ENCODE measurements at regions of chr4 and their contacts with region 1.

Region 1: DNA sequence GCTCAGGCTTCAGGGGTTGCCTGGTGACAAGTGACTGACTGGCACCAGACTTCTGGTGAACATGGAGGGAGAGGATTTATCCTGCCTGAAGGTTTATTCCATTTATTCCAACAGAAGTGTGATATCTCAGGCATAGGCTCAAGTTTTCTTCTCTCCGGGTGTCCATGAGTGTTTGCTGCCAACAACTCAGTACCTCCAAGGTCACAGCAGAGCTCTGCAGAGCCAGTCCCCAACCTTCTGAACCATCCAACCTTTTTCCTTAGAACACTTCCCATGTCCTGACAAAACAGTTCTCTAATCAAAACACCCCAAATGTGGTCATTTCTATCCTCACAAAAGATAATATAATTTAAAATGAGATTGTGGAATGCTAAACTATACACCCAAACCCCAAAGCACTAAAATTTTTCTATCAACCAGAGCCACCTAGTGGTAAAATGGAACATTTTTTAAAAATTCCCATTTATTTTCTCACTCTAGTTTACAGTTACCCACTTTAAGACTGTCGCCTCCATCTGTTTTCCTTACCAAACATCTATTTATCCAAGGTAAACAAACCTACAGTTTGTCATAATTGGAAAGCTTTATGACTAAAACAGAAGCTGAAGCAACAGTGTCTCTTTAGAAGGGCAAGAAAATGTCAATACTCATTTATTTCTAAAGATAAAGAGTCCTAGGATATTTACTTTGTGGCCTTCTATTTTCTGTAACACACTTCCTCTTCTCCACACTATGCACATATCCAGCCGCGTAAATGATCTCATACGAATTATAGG is 39.6 kb downstream of the TMEM154 start:
- DNase-seq: no peak
- ATAC-seq: 0 out of 3 replicates have a peak, but pooled peaks have one; percentile 3
- H3K4me3 ChIP-seq: no peak overlapping the region
- H3K27ac ChIP-seq: no peak overlapping the region; the same call in 1 of the 2 replicates
- H3K4me1 ChIP-seq: peaks cover 65% of the 10 kb centered on the region
- H3K27me3 ChIP-seq: no peaks in the 10 kb centered on the region
- CTCF ChIP-seq: peak; percentile 34 to 63 (median 49); a peak in 4 of 6 replicates
- EP300 ChIP-seq: no peak
- POLR2A ChIP-seq: no peak
- RAD21 ChIP-seq: peak; percentile 75

Region 2: GRCh38 chr4:152408514-152409327 is 231.5 kb before region 1 on chr4:
- CTCF ChIA-PET with region 1: interaction called, 77 read pairs
- POLR2A ChIA-PET with region 1: interaction called, 4 read pairs
- RAD21 ChIA-PET with region 1: interaction called, 16 read pairs
- SMC1A ChIA-PET with region 1: interaction called, 58 read pairs
- in situ Hi-C with region 1: no loop called
- intact Hi-C with region 1: loop called (anchors 2 kb)
- DNase-seq: no peak
- ATAC-seq: peak; percentile 86
- H3K4me3 ChIP-seq: no peak overlapping the region
- H3K27ac ChIP-seq: no peak overlapping the region
- H3K4me1 ChIP-seq: no peaks in the 10 kb centered on the region
- H3K27me3 ChIP-seq: no peaks in the 10 kb centered on the region
- CTCF ChIP-seq: peak; percentile 53 to 58 (median 58); a peak in 5 of 6 replicates
- EP300 ChIP-seq: no peak
- POLR2A ChIP-seq: no peak
- RAD21 ChIP-seq: peak; percentile 72

Region 3: DNA sequence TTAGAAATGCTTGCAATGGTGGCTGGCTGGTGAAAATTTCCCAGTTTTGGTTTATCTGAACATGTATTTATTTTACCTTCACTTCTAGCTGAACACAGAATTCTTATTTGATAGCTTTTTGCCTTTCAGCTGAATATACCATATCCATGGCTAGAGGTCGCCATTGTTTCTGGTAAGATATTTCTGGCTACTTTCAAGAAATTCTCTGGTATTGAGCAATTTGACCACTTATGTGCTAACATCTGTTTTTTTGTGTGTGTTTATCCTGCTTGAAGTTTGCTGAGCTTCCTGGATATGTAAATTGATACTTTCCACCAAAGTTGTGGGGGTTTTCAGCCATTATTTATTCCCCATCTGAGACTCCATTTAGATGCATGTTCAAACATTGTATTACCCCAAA is 179.8 kb before region 1 on chr4:
- CTCF ChIA-PET with region 1: interaction called, 186 read pairs
- POLR2A ChIA-PET with region 1: interaction called, 7 read pairs
- RAD21 ChIA-PET with region 1: interaction called, 101 read pairs
- SMC1A ChIA-PET with region 1: interaction called, 227 read pairs
- in situ Hi-C with region 1: no loop called
- intact Hi-C with region 1: loop called (anchors 2 kb)
- DNase-seq: peak; percentile 43
- ATAC-seq: peak; percentile 32
- H3K4me3 ChIP-seq: no peak overlapping the region
- H3K27ac ChIP-seq: peak overlapping the region; percentile 73
- H3K4me1 ChIP-seq: peaks cover 54% of the 10 kb centered on the region
- H3K27me3 ChIP-seq: no peaks in the 10 kb centered on the region
- CTCF ChIP-seq: peak; percentile 9 to 57 (median 38); a peak in 4 of 6 replicates
- EP300 ChIP-seq: no peak
- POLR2A ChIP-seq: no peak
- RAD21 ChIP-seq: peak; percentile 68

Region 4: DNA sequence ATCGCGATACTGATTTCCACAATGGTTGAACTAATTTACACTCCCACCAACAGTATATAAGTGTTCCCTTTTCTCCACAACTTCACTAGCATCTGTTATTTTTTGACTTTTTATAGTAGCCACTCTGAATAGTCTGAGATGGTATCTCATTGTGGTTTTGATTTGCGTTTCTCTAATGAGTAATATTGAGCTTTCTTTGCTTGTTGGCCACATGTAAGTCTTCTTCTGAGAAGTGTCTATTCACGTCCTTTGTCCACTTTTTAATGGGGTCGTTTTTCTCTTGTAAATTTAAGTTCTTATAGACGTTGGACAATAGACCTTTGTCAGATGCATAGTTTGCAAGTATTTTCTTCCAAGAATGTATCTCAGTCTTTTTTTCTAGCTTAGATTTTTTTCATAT is 114.4 kb before region 1 on chr4:
- CTCF ChIA-PET with region 1: interaction called, 11 read pairs
- POLR2A ChIA-PET with region 1: interaction called, 7 read pairs
- RAD21 ChIA-PET with region 1: interaction called, 47 read pairs
- SMC1A ChIA-PET with region 1: interaction called, 228 read pairs
- in situ Hi-C with region 1: no loop called
- intact Hi-C with region 1: no loop called
- DNase-seq: no peak
- ATAC-seq: peak; percentile 55
- H3K4me3 ChIP-seq: peak overlapping the region; percentile 46; the same call in 1 of the 2 replicates
- H3K27ac ChIP-seq: peak overlapping the region; percentile 55
- H3K4me1 ChIP-seq: peaks cover 53% of the 10 kb centered on the region
- H3K27me3 ChIP-seq: no peaks in the 10 kb centered on the region
- CTCF ChIP-seq: no peak
- EP300 ChIP-seq: no peak
- POLR2A ChIP-seq: no peak
- RAD21 ChIP-seq: no peak

Region 5: DNA sequence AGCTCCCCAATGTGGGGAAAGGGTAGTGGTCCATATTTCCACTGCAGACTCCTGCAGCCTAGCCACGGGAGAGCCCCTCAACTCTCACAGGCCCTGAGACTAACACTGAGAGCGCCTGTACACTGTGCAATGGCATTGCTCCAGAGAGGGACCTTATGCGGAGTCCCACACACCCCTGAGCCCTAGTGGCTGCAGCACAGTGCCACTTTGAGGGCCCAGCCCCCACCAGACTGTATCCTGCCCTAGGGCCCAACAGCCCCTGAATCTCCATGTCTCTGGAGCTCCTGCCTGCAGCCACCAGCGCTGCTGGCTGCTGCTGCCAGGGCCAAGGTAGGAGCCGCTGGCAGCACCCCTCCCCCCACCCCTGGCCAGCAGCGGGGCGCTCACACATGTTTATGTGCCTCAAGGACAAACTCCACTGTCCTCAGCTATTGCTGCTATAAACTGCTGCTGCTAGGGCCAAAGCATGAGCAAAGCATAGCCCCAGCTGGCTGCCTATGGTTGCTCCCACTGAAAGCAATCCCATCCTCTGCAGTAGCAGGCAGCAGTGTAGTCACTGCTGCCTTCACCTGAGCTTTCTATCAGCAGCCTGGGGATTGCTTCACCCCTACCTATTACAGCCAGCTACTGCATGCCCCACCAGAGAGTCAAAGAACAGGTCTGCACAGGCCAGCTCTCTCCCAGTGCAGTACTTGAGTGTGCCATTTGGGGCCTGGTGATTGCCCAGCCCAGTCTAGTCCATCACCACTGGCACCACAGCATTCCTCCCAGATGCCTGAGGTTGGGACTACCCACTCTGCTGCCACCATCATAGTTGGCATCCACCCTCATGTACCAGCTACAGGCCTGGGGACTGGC is 15.3 kb after region 1 on chr4:
- CTCF ChIA-PET with region 1: interaction called, 31 read pairs
- POLR2A ChIA-PET with region 1: interaction called, 4 read pairs
- RAD21 ChIA-PET with region 1: interaction called, 9 read pairs
- SMC1A ChIA-PET with region 1: interaction called, 134 read pairs
- in situ Hi-C with region 1: no loop called
- intact Hi-C with region 1: no loop called
- DNase-seq: no peak
- ATAC-seq: no peak
- H3K4me3 ChIP-seq: no peak overlapping the region
- H3K27ac ChIP-seq: no peak overlapping the region
- H3K4me1 ChIP-seq: peaks cover 15% of the 10 kb centered on the region
- H3K27me3 ChIP-seq: no peaks in the 10 kb centered on the region
- CTCF ChIP-seq: no peak
- EP300 ChIP-seq: no peak
- POLR2A ChIP-seq: no peak
- RAD21 ChIP-seq: no peak

Region 6: GRCh38 chr4:152709683-152710438 is 69.6 kb after region 1 on chr4:
- CTCF ChIA-PET with region 1: interaction called, 5 read pairs
- POLR2A ChIA-PET with region 1: interaction called, 3 read pairs
- RAD21 ChIA-PET with region 1: interaction called, 11 read pairs
- SMC1A ChIA-PET with region 1: interaction called, 23 read pairs
- in situ Hi-C with region 1: no loop called
- intact Hi-C with region 1: no loop called
- DNase-seq: peak; percentile 42
- ATAC-seq: peak; percentile 95
- H3K4me3 ChIP-seq: no peak overlapping the region
- H3K27ac ChIP-seq: peak overlapping the region; percentile 45
- H3K4me1 ChIP-seq: peaks cover 11% of the 10 kb centered on the region
- H3K27me3 ChIP-seq: no peaks in the 10 kb centered on the region
- CTCF ChIP-seq: no peak
- EP300 ChIP-seq: no peak; a peak in 1 of 4 replicates
- POLR2A ChIP-seq: no peak
- RAD21 ChIP-seq: no peak

Region 7: DNA sequence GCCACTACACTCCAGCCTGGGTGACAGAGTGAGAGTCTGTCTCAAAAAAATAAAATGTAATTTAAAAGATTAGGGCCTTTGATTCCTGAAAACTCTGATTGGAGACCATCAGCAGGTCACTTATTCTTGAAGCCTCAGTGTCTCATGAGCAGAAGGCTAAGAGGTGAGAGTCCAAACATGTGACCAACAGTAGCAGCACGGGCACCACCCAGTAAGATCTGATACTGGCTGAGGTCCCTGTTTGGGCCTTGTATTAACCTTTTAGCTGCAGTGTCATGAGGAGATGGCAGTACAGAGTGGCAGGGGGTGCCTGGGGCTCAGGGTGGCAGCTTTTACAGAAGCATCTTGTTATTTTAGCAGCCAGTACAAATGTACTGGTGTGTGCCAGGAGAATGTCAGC is 385.2 kb after region 1 on chr4:
- CTCF ChIA-PET with region 1: no interaction called
- POLR2A ChIA-PET with region 1: no interaction called
- RAD21 ChIA-PET with region 1: no interaction called
- SMC1A ChIA-PET with region 1: no interaction called
- in situ Hi-C with region 1: no loop called
- intact Hi-C with region 1: no loop called
- DNase-seq: no peak
- ATAC-seq: no peak
- H3K4me3 ChIP-seq: no peak overlapping the region
- H3K27ac ChIP-seq: no peak overlapping the region
- H3K4me1 ChIP-seq: 0 out of 2 replicates have a peak, but pooled peaks cover 5% of the 10 kb centered on the region
- H3K27me3 ChIP-seq: no peaks in the 10 kb centered on the region
- CTCF ChIP-seq: no peak
- EP300 ChIP-seq: no peak
- POLR2A ChIP-seq: no peak
- RAD21 ChIP-seq: no peak

Measured in GM12878 (cell line).